Heart right ventricle (tissue), 16 donors: ENCODE measurements at regions of chr3 and their contacts with region 1.

Region 1: GRCh38 chr3:14508961-14509795 is 31.0 kb downstream of the GRIP2 start:
- DNase-seq: peak; percentile 69 to 81
- ATAC-seq: peak; percentile 52 to 84 (median 68)
- H3K4me3 ChIP-seq: no peak overlapping the region
- H3K27ac ChIP-seq: peak overlapping the region in 5 of 10 donors; percentile 1 to 61 (median 32)
- H3K4me1 ChIP-seq: peaks cover 0 to 19% (median 3%) of the 10 kb centered on the region in 9 donors
- H3K27me3 ChIP-seq: no peaks in the 10 kb centered on the region
- CTCF ChIP-seq: peak; percentile 94 to 99 (median 97)

Region 2: DNA sequence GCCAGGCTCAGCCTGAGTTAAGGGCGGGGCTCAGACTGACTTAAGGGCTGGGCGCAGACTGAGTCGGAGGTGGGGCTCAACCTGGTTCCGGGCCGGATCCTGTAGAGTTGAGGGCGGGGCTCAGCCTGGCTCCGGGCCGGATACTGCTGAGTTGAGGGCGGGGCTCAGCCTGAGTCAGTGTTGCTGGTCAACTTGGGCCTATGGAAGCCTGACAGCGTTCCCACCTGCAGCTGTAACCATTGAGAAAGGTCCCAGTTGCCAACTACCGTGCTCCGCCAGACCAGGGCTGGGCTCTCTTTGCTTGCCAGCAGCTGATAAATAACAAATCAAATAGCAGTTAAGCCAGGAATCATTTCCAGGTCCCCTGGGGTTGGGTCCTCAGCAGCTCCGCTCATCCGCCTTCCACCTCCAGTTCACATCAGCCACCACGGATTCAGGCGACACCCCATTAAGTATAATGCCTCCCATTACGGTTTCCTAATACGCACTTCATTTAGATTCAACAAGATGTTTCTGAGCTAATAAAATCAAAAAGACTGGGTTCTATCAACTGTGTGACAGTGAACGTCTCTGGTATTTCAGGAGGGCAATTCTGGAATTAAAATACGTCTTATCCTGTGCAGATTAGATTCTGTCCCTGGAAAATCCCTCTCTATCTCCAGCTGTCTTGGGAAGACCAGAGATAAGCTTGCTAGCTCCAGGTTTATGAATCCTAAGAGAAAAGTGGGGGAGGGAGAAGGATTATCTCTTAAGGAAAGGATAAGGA is 23.7 kb after region 1 on chr3:
- intact Hi-C with region 1: no loop called
- DNase-seq: peak in 1 of 2 donors; percentile 62
- ATAC-seq: peak; percentile 47 to 83 (median 80)
- H3K4me3 ChIP-seq: no peak overlapping the region
- H3K27ac ChIP-seq: peak overlapping the region in 8 of 10 donors; percentile 16 to 91 (median 60)
- H3K4me1 ChIP-seq: peaks cover 27 to 68% (median 49%) of the 10 kb centered on the region in 9 donors
- H3K27me3 ChIP-seq: peaks cover 0 to 9% (median 0%) of the 10 kb centered on the region in 7 donors
- CTCF ChIP-seq: no peak

Region 3: GRCh38 chr3:14548321-14548729 is 39.1 kb after region 1 on chr3:
- intact Hi-C with region 1: loop called (anchors 1 to 5 kb)
- DNase-seq: peak; percentile 64 to 82
- ATAC-seq: peak; percentile 79 to 93 (median 86)
- H3K4me3 ChIP-seq: no peak overlapping the region
- H3K27ac ChIP-seq: peak overlapping the region in 2 of 10 donors; percentile 12 to 44
- H3K4me1 ChIP-seq: peaks cover 0 to 35% (median 11%) of the 10 kb centered on the region in 9 donors
- H3K27me3 ChIP-seq: peaks cover 0 to 7% (median 0%) of the 10 kb centered on the region in 7 donors
- CTCF ChIP-seq: peak; percentile 45 to 84 (median 78)

Region 4: GRCh38 chr3:14555835-14556234 is 46.7 kb after region 1 on chr3:
- intact Hi-C with region 1: loop called in 1 of 10 experiments (anchors 1 kb)
- DNase-seq: peak; percentile 39 to 55
- ATAC-seq: peak; percentile 72 to 92 (median 82)
- H3K4me3 ChIP-seq: peak overlapping the region in 9 of 10 donors; percentile 15 to 52 (median 35)
- H3K27ac ChIP-seq: peak overlapping the region in 3 of 10 donors; percentile 47 to 54 (median 51)
- H3K4me1 ChIP-seq: peaks cover 0 to 35% (median 17%) of the 10 kb centered on the region in 9 donors
- H3K27me3 ChIP-seq: peaks cover 0 to 29% (median 14%) of the 10 kb centered on the region in 7 donors
- CTCF ChIP-seq: no peak

Region 5: GRCh38 chr3:14633819-14634424 is 124.7 kb after region 1 on chr3:
- intact Hi-C with region 1: loop called in 1 of 10 experiments (anchors 10 kb)
- DNase-seq: peak; percentile 32 to 50
- ATAC-seq: peak in 7 of 8 donors; percentile 34 to 80 (median 71)
- H3K4me3 ChIP-seq: no peak overlapping the region
- H3K27ac ChIP-seq: no peak overlapping the region
- H3K4me1 ChIP-seq: no peaks in the 10 kb centered on the region
- H3K27me3 ChIP-seq: peaks cover 0 to 40% (median 29%) of the 10 kb centered on the region in 7 donors
- CTCF ChIP-seq: peak; percentile 44 to 89 (median 76)

Region 6: GRCh38 chr3:14780927-14781507 is 271.8 kb after region 1 on chr3:
- intact Hi-C with region 1: loop called in 1 of 10 experiments (anchors 10 kb)
- DNase-seq: peak; percentile 46 to 61
- ATAC-seq: peak; percentile 65 to 93 (median 88)
- H3K4me3 ChIP-seq: no peak overlapping the region
- H3K27ac ChIP-seq: no peak overlapping the region
- H3K4me1 ChIP-seq: peaks cover 0 to 18% (median 0%) of the 10 kb centered on the region in 9 donors
- H3K27me3 ChIP-seq: peaks cover 0 to 13% (median 0%) of the 10 kb centered on the region in 7 donors
- CTCF ChIP-seq: peak; percentile 39 to 82 (median 70)